Dorsolateral prefrontal cortex (tissue), 120 donors: ENCODE measurements at regions of chr10 and their contacts with region 1.

Region 1: DNA sequence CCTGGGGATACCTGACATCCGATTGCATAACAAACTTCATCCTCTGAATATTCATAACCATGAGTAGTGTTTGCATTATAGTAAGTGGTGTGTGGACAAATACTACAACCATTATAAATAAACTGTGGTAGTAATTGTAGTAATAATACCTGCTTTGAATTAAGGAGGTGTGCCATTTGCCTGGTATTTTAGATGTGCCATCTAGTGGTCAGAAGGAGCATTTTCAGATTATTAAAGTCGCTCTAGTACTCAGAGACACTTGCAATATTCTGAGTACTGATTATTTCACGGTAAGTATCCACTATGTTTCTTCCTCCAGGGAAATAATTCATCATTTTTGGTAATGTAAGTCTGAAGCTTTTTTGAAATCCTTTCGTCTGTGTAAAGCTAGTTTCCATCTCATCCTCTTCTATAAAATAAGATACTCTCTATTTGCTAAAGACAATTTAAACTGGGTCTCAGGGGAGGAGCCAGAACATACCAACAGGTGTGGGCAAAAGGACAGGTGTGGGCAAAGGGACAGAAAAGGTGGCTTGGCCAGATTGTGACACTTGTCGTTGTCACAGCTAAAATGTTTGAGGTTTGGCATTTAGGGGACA is 115.3 kb upstream of the WDR11 start:
- DNase-seq: no peak
- H3K4me3 ChIP-seq: no peak overlapping the region
- H3K27ac ChIP-seq: no peak overlapping the region
- H3K27me3 ChIP-seq: no peaks in the 10 kb centered on the region
- CTCF ChIP-seq: peak; percentile 49 to 85 (median 72)

Region 2: DNA sequence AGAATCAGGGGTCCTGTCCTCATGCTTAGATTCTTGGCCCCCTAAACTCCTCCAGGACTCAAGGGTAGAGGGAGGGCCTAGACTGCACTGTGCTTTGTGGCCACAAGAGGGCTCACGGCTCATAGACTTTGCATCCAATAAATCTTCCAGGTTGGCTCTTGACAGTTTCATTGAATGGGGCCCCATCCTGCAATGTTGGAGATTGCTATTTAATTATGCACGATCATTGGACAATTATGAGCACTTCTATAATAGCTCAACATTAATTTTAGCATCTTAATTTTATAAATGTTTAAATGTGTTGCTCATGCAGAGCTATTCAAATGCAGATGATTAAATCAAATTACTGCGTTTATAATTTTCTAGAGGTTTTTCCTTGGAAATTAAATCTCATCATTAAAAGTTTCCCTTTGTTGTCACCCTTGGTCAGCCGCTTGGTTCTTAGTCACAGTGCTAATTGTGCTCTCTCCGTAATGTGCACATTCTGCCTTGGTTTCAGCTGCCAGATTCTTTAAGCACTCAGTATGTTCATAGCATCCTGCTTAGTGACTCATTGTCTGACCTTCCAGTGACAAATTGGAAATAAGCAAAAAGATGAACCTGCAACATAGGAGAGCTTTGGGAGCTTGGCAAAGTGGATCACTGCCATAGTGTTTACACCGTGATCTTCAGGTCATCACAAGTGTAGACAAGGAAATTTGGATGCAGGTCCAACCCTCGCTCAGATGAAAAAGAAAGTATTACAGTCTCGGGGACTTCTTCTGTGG is 312.3 kb before region 1 on chr10:
- intact Hi-C with region 1: loop called (anchors 2 to 5 kb)
- DNase-seq: peak in 9 of 10 donors; percentile 34 to 73 (median 59)
- H3K4me3 ChIP-seq: no peak overlapping the region
- H3K27ac ChIP-seq: no peak overlapping the region
- H3K27me3 ChIP-seq: peaks cover 0 to 5% (median 0%) of the 10 kb centered on the region in 45 donors
- CTCF ChIP-seq: peak; percentile 55 to 95 (median 86)

Region 3: DNA sequence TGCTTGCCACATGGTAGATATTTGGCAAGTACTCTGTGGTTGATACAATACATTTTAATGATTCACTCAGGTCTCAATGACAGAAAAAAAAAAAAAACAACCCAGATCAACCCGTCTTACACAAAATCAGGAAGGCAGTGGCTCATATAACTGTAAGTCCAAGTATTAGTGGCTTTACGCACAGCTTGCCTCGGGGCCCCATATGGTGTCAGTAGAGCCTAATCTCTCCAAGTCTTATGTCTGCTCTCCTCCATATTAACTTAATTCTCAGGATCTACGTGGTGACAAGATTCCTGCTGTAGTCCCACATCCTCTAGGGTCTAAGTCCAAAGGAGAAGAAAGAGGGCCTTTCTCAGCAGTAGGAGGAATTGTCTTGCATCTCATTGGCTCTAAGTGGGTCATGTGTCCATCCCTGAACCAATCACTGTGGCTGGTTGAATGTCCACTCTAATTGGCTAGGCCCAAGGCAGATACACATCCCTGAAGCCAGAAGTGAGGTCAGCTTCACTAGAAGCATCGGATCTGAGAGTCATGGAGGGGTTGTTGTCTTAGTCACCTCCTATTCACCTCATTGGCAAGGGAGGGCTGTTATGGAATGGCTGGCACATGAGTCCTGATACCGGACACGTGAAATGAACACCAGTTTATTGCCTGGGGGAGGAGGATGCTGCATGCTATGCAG is 299.3 kb before region 1 on chr10:
- intact Hi-C with region 1: loop called in 1 of 2 experiments (anchors 5 kb)
- DNase-seq: no peak
- H3K4me3 ChIP-seq: no peak overlapping the region
- H3K27ac ChIP-seq: no peak overlapping the region
- H3K27me3 ChIP-seq: peaks cover 0 to 16% (median 0%) of the 10 kb centered on the region in 45 donors
- CTCF ChIP-seq: peak in 21 of 56 donors; percentile 8 to 64 (median 32)

Region 4: DNA sequence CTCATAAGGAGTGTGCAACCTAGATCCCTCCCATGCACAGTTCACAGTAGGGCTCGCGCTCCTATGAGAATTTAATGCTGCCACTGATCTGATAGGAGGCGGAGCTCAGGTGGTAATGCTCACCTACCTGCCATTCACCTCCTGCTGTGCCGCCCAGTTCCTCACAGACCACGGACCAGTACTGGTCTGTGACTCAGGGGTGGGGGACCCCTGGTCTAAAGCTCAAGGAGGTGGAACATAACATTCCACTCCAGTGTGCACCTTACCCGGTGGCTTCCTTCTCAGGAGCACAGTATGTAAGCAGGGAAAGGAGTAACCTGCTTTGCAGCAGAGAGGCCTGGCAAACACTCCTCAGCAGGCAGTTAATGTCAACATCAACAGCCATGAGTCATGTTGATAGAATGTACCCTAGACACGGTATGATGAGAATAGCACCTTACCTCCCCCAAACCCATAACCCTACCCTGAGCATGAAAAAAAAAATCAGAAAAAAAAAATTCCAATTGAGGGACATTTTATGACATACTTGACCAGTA is 588.9 kb after region 1 on chr10:
- intact Hi-C with region 1: no loop called
- DNase-seq: no peak
- H3K4me3 ChIP-seq: no peak overlapping the region
- H3K27ac ChIP-seq: no peak overlapping the region
- H3K27me3 ChIP-seq: peaks cover 0 to 5% (median 0%) of the 10 kb centered on the region in 45 donors
- CTCF ChIP-seq: no peak